OCI-LY7 (cell line): ENCODE measurements at regions of chr20 and their contacts with region 1.

Region 1: GRCh38 chr20:44115762-44116644 is 71.0 kb downstream of the JPH2 start:
- DNase-seq: no peak
- H3K4me3 ChIP-seq: no peak overlapping the region
- H3K27ac ChIP-seq: no peak overlapping the region
- H3K4me1 ChIP-seq: no peaks in the 10 kb centered on the region
- CTCF ChIP-seq: no peak

Region 2: DNA sequence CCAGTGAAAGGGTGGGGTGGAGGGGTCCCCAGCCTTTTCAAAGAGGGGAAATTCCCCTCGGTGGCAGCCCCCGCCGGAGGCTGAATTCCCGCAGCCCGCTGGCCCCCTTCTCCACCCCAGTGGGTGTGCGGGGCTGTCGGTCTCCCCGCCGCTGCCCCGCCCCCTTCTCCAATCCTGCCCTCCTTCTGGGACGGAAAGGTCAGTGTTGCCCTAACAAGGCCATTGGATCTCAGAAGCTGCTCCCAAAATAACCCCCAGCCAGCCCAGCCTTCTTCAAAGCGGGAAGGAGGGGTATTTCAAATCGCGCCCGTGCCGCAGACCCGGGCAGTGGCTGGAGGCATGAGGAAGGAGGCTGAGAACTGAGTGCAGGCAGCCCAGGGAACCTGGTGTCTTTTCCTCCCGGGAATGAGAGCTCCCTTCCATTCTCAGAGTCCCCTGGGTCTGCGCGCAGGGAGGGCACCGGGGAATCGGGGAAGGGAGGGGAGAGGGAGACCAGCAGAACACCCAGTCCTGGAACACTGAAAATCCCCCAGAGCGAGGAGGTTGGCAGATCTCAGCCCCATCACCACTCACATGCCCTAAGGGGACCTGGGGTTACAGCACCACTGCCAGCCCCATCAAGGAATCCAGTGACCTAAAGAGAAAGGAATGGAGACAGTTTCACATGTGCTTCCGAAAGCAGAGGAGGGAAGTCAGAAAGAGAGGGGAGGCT is 71.2 kb after region 1 on chr20 and contains the start of gene JPH2:
- CTCF ChIA-PET with region 1: interaction called, 5 read pairs
- POLR2A ChIA-PET with region 1: no interaction called
- intact Hi-C with region 1: loop called (anchors 1 kb)
- DNase-seq: no peak
- H3K4me3 ChIP-seq: no peak within 1 kb of the TSS
- H3K27ac ChIP-seq: no peak within 1 kb of the TSS
- H3K4me1 ChIP-seq: peaks cover 12% of the 10 kb centered on the region
- CTCF ChIP-seq: no peak
- total RNA-seq, gene JPH2: not detected in 2 replicates

Region 3: DNA sequence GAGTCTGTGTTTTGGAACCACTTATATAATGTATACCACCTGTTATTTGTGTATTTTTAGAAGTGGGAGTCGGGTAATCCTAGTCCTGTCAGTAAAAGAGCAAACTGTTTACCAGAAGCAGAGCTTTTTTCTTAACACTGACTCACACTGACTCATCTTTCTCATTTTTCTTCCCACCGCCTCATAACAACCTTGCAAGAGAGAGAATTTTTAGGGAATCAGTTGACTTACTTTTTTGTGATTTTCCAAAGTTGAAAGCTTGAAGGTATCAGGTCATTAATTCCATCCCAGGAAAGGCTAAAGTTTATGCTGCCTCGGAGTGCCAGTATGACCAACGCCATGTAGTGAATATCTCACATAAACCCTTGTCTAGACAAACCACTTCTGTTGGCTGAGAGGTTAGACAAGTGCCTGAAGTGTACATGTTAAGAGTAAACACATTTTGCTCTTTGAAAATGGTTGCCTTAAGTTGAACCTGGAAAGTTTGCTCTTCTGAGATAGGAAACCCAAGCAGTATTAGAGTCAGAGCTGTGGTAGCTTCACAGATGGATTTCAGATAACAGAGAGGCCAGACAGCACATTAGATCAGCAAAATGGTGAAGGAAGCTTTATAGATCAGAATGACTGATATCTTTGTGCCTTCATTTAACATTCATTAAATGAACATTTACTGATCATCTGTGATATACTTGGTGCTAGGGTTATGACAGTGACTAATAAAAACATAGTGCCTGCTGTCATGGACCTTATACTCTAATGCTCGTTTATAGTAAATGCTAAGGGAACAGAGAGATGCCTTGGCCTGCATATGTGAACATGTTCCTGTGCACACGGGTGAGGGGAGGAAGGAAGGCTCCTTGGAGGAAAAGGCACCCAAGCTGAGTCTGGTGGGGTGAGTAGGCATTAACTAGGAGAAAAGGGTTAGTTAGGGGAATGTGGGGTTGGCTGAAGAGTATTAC is 437.2 kb after region 1 on chr20:
- CTCF ChIA-PET with region 1: no interaction called
- POLR2A ChIA-PET with region 1: interaction called, 10 read pairs
- intact Hi-C with region 1: no loop called
- DNase-seq: no peak
- H3K4me3 ChIP-seq: no peak overlapping the region
- H3K27ac ChIP-seq: no peak overlapping the region
- H3K4me1 ChIP-seq: peaks cover 16% of the 10 kb centered on the region
- CTCF ChIP-seq: no peak